Activated CD4-positive, alpha-beta memory T cell treated with anti-CD3 and anti-CD28 coated beads, Interleukin-2, amount 10 ng/mL, durations not matched to agents 7 days and 5 days (primary cell): ENCODE measurements at regions of chr3 and their contacts with region 1.

Region 1: GRCh38 chr3:151265866-151266265 is 12.5 kb downstream of the P2RY14 start:
- DNase-seq: no peak
- H3K4me3 Mint-ChIP-seq: no peak overlapping the region
- H3K27ac Mint-ChIP-seq: no peak overlapping the region
- H3K4me1 Mint-ChIP-seq: peaks cover 28% of the 10 kb centered on the region
- H3K27me3 Mint-ChIP-seq: no peaks in the 10 kb centered on the region

Region 2: GRCh38 chr3:151276687-151277042 is 10.8 kb after region 1 on chr3:
- CTCF ChIA-PET with region 1: interaction called, 18 read pairs
- POLR2A ChIA-PET with region 1: interaction called, 4 read pairs
- DNase-seq: peak; percentile 43
- H3K4me3 Mint-ChIP-seq: peak overlapping the region; percentile 42
- H3K27ac Mint-ChIP-seq: peak overlapping the region; percentile 83
- H3K4me1 Mint-ChIP-seq: peaks cover 51% of the 10 kb centered on the region
- H3K27me3 Mint-ChIP-seq: no peaks in the 10 kb centered on the region

Region 3: DNA sequence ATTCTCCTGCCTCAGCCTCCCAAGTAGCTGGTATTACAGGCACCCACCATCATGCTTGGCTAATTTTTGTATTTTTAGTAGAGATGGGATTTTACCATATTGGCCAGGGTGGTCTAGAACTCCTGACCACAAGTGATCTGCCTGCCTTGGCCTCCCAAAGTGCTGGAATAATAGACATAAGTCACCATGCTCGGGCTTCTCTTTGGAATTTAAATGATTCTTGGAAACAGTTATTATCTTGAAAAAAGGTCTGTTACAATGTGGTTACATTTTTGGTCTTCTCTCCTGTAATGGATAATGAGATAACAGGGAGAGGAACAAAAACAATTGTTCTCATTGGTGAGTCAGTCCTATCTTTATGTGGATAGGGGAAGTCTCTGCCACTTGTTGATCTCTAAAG is 408.1 kb after region 1 on chr3:
- CTCF ChIA-PET with region 1: no interaction called
- POLR2A ChIA-PET with region 1: no interaction called
- DNase-seq: no peak
- H3K4me3 Mint-ChIP-seq: no peak overlapping the region
- H3K27ac Mint-ChIP-seq: no peak overlapping the region
- H3K4me1 Mint-ChIP-seq: no peaks in the 10 kb centered on the region
- H3K27me3 Mint-ChIP-seq: no peaks in the 10 kb centered on the region